Mucosa of descending colon (tissue), 3 donors: ENCODE measurements at regions of chr4 and their contacts with region 1.

Region 1: DNA sequence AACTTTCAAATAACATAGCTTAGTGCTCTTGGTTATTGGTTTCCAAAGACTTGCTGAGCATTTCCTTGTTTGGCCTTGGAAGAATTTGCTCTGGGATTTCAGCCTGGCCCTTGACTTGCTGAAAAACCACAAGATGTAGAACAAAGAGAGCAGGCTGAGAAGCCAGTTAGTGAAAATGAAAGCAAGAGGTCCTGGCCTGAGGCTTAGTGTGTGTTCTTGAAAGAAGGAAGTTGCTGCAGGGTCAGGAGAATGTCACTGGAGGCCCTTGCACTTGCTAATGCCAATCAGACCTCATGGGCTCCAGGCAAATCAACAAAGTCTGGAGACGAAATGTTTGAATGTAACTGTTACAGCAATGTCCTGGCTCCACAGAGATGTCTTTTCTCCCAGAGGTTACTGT is 79.4 kb downstream of the SYNPO2 start:
- DNase-seq: peak in 1 of 3 donors; percentile 67
- ATAC-seq: peak; percentile 90
- H3K4me3 ChIP-seq: no peak overlapping the region
- H3K4me1 ChIP-seq: peaks cover 7% of the 10 kb centered on the region
- CTCF ChIP-seq: no peak

Region 2: DNA sequence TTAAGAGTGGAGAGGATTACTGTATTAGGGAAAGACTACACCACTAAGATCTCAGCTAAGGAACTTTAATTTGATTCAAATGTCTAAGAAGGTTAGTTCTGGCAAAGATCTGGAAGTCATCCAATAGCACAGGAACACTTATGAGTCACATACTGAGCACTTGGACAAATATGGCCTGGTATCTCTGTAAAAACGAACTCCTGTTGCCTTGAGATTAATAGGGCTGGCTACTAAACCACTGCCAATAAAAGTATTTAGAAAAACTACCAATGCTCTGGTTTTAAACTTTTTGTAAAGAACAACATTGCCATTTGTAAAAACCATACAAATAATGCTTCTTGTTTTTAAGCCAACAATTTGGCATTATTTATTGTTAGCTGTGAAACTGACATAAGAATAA is 202.6 kb before region 1 on chr4:
- intact Hi-C with region 1: loop called in 1 of 2 experiments (anchors 10 kb)
- DNase-seq: no peak
- ATAC-seq: peak; percentile 67
- H3K4me3 ChIP-seq: no peak overlapping the region
- H3K4me1 ChIP-seq: no peaks in the 10 kb centered on the region
- CTCF ChIP-seq: no peak

Region 3: GRCh38 chr4:118898684-118899138 is 69.3 kb before region 1 on chr4:
- intact Hi-C with region 1: loop called (anchors 10 kb)
- DNase-seq: no peak
- ATAC-seq: no peak
- H3K4me3 ChIP-seq: no peak overlapping the region
- H3K4me1 ChIP-seq: no peaks in the 10 kb centered on the region
- CTCF ChIP-seq: no peak

Region 4: DNA sequence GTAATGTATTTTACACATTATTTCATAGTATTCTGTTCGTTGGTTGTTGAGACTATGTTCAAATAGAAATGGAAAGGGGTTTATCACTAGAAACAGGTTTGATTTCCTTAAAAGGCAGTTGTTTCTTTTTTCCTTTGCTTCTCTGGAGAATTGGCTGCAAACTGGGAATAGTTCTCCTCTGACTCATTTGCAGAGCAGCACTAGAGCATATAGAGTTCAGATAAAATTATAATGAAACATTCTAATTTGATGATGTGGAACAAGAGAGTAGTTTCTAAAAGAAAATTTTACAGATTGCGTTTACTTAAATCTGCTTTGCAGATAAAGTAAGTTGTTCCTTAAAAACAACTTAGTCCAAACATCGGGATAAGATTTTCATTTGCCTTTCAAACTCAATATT is 49.6 kb before region 1 on chr4:
- intact Hi-C with region 1: no loop called
- DNase-seq: no peak
- ATAC-seq: no peak
- H3K4me3 ChIP-seq: no peak overlapping the region
- H3K4me1 ChIP-seq: no peaks in the 10 kb centered on the region
- CTCF ChIP-seq: no peak